Endothelial cell of umbilical vein (primary cell): ENCODE measurements at regions of chr19 and their contacts with region 1.

Region 1: DNA sequence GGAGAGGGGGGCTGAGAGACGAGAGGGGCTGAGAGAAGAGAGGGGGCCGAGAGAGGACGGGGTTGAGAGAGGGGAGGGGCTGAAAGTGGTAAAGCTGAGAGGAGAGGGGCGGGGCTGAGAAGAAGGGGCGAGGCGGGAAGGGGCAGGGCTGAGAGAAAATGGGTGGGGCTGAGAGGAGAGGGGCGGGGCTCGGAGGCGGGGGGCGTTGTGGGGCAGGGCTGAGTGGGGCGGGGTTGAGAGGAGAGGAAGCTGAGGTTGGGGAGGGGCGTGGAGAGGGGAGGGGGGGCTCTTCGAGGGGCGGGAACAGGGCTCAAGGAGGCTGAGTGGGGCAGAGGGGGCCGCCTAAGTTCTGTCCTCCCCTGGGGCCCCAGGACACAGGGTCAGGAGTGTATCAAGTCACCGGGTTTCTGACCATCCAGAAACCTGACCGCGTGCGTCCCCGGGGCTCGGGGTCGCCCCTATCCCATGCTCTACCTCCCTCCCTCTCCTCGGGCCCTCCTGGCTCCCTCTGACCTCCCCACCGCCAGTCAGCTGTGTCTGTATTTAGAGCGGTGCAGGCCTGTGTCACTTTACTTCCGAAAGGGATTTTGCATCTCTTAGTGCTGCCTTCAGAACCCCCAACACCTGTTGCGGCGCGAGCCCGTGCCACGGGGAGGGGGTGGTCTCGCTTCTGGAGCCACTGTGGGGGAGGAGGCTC is 38.6 kb upstream of the SEMA6B start:
- DNase-seq: no peak
- H3K4me3 ChIP-seq: peak overlapping the region in 2 of 3 experiments; percentile 25 to 42
- H3K27ac ChIP-seq: no peak overlapping the region
- H3K4me1 ChIP-seq: no peaks in the 10 kb centered on the region
- H3K27me3 ChIP-seq: peaks cover 0 to 4% of the 10 kb centered on the region in 2 experiments
- CTCF ChIP-seq: no peak
- POLR2A ChIP-seq: no peak

Region 2: DNA sequence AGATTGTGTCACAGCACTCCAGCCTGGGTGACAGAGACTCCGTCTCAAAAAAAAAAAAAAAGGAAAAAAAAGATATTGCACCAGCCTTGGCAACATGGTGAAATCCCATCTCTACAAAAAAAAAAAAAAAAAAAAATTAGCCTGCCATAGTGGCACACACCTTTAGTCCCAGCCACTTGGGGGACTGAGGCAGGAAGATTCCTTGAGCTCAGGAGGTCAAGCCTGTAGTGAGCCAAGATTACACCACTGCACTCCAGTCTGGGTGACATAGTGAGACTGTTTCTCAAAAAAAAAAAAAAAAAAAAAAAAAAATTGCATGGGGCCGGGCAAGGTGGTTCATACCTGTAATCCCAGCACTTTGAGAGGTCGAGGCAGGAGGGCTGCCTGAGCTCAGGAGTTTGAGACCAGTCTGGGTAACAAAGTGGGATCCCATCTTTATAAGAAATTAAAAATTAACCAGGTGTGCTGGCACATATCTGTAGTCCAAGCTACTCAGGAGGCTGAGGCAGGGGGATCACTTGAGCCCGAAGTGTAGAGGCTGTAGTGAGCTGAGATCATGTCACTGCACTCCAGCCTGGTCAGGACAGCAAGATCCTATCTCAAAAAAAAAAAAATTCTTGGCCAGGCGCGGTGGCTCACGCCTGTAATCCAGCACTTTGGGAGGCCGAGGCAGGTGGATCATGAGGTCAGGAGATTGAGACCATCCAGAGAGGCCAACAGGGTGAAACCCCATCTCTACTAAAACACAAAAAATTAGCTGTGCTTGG is 133.1 kb before region 1 on chr19:
- CTCF ChIA-PET with region 1: no interaction called
- POLR2A ChIA-PET with region 1: interaction called, 10 read pairs
- dilution Hi-C with region 1: no loop called
- intact Hi-C with region 1: no loop called
- DNase-seq: no peak
- H3K4me3 ChIP-seq: no peak overlapping the region
- H3K27ac ChIP-seq: no peak overlapping the region
- H3K4me1 ChIP-seq: no peaks in the 10 kb centered on the region
- H3K27me3 ChIP-seq: no peaks in the 10 kb centered on the region
- CTCF ChIP-seq: no peak
- POLR2A ChIP-seq: no peak

Region 3: DNA sequence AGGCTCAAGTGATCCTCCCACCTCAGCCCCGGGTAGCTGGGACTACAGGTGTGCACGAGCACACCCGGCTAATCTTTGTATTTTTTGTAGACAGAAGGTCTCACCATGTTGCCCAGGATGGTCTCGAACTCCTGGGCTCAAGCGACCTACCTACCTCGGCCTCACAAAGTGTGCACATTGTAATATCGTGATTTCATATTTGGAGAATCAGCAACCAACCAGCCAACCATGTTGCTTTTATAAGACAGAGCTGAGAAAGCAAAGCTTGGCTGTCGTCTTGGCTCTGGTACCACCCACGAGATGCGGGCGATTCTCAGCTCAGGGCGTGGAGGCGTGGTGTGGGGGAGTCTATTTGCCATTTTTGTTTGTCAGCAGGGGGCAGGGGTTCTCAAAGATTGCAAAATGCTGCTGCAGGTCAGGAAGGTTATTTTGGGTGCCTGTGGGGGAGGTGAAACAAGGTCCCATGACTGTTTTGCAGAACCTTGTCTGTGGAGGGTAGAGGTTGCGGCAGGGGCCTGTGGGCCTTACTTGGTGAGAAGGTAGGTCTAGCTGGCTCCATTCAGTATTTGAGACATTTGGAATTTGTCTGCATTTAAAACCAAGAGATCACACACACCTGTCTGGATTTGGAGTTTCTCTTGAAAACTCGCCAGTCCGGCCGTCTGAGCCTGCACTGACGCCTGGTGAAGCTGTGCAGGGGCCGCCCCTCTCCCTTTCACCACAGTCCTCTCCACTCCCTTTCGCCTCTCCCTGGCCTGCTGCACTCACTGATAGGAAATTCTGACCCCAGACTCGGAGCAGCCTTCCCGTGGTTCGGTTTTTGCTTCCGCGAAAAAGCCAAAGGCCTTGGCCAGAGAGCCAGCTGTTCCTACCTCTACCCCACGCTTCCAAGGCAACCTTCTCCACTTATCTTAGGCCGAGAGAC is 56.6 kb after region 1 on chr19:
- CTCF ChIA-PET with region 1: no interaction called
- POLR2A ChIA-PET with region 1: no interaction called
- dilution Hi-C with region 1: no loop called
- intact Hi-C with region 1: no loop called
- DNase-seq: no peak
- H3K4me3 ChIP-seq: no peak overlapping the region
- H3K27ac ChIP-seq: no peak overlapping the region
- H3K4me1 ChIP-seq: peaks cover 5% of the 10 kb centered on the region
- H3K27me3 ChIP-seq: no peaks in the 10 kb centered on the region
- CTCF ChIP-seq: no peak
- POLR2A ChIP-seq: no peak